ENCODE measurements at regions of chr18 and their contacts with region 1.

Region 1: DNA sequence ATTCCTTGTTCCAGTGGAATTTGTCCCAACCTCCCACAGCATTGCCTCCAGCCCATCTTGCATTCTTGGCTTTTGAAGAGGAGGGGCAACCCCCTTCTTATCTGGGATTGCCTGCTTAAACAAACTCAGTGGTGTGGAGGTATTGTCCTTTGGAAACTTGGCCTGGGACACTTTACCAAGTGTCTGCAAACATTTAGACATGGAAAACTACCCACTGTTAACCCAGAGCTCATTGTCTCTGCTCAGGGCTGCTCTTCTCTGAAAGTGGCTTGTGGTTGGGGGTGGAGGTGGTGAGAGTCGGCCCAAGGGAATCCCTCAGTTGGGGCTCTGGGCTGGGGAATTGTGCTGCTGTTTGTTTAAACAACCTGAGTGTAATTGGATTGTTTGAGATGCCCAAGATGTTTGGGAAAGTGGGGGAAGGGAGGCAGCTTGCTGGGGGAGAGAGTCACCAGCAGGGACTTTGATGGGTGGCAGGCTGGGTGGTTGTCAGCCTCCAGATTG is 178.3 kb upstream of the GATA6 start:
- DNase-seq: peak; percentile 91 to 96
- H3K4me3 ChIP-seq: no peak overlapping the region
- H3K4me3 Mint-ChIP-seq: peak overlapping the region; percentile 59
- H3K27ac Mint-ChIP-seq: peak overlapping the region; percentile 96
- H3K4me1 ChIP-seq: peaks cover 76% of the 10 kb centered on the region
- H3K4me1 Mint-ChIP-seq: peaks cover 31% of the 10 kb centered on the region
- H3K27me3 ChIP-seq: no peaks in the 10 kb centered on the region
- H3K27me3 Mint-ChIP-seq: no peaks in the 10 kb centered on the region
- CTCF ChIP-seq: no peak

Region 2: GRCh38 chr18:21955757-21956652 is 35.1 kb before region 1 on chr18:
- CTCF ChIA-PET with region 1: interaction called, 4 read pairs
- POLR2A ChIA-PET with region 1: no interaction called
- intact Hi-C with region 1: loop called (anchors 2 kb)
- DNase-seq: peak; percentile 79 to 84
- H3K4me3 ChIP-seq: no peak overlapping the region
- H3K4me3 Mint-ChIP-seq: no peak overlapping the region
- H3K27ac Mint-ChIP-seq: no peak overlapping the region
- H3K4me1 ChIP-seq: peaks cover 6% of the 10 kb centered on the region; the same call in 1 of the 2 replicates
- H3K4me1 Mint-ChIP-seq: peaks cover 14% of the 10 kb centered on the region
- H3K27me3 ChIP-seq: no peaks in the 10 kb centered on the region
- H3K27me3 Mint-ChIP-seq: no peaks in the 10 kb centered on the region
- CTCF ChIP-seq: peak; percentile 86 to 90

Region 3: DNA sequence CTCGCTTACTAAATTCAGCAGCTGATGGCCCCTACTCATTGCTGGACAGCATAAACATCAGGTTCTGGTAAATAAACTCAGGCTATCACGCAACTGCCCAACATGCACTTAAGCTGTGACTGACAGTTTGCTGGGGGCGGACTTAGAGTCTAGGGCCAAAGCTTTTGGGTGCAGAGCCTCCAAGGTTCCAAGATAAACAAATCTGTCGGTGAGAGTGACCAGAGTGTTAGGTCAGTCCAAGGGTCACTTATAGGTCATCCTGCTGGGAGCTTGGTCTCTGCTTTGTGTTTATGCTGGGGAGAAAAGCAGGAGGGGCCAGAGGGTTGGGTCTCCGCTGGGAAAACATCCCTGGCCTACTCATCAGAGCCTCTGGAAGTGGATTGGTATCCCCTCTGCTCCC is 10.4 kb before region 1 on chr18:
- CTCF ChIA-PET with region 1: interaction called, 12 read pairs
- POLR2A ChIA-PET with region 1: interaction called, 19 read pairs
- intact Hi-C with region 1: loop called (anchors 1 kb)
- DNase-seq: peak; percentile 82 to 89
- H3K4me3 ChIP-seq: no peak overlapping the region
- H3K4me3 Mint-ChIP-seq: peak overlapping the region; percentile 66
- H3K27ac Mint-ChIP-seq: peak overlapping the region; percentile 86
- H3K4me1 ChIP-seq: peaks cover 45% of the 10 kb centered on the region
- H3K4me1 Mint-ChIP-seq: peaks cover 37% of the 10 kb centered on the region
- H3K27me3 ChIP-seq: no peaks in the 10 kb centered on the region
- H3K27me3 Mint-ChIP-seq: no peaks in the 10 kb centered on the region
- CTCF ChIP-seq: no peak

Region 4: DNA sequence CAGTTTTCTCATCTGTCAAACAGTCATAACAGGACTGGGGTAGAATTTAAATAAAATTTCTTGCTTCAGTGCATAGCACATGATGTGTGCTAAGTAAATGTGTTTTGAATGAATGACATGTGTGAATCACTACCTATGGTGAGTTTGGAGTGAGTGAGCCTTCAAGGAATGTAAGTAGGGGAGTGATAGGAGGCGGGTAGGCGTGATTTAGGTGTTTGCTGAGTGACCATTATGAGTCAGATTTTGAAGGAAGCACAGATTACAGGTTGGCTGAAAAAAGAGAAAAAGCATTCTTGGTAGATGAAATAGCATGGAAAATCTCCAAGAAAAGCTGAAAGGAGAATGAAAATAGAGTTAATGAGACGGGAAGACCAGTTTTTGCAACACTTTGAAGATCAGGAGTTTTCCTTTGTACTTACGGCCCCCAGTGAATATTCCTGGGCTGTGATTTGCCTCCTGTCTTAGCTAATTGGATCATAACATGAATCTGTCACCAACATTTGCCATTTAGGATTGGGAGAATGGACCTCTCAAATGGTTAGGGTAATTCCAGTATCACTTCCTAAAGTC is 41.3 kb after region 1 on chr18:
- CTCF ChIA-PET with region 1: interaction called, 4 read pairs
- POLR2A ChIA-PET with region 1: interaction called, 5 read pairs
- intact Hi-C with region 1: loop called (anchors 1 kb)
- DNase-seq: peak; percentile 83 to 87
- H3K4me3 ChIP-seq: no peak overlapping the region
- H3K4me3 Mint-ChIP-seq: peak overlapping the region; percentile 57
- H3K27ac Mint-ChIP-seq: peak overlapping the region; percentile 95
- H3K4me1 ChIP-seq: peaks cover 44% of the 10 kb centered on the region
- H3K4me1 Mint-ChIP-seq: peaks cover 31% of the 10 kb centered on the region
- H3K27me3 ChIP-seq: no peaks in the 10 kb centered on the region; the same call in 1 of the 2 replicates
- H3K27me3 Mint-ChIP-seq: no peaks in the 10 kb centered on the region
- CTCF ChIP-seq: no peak

Region 5: DNA sequence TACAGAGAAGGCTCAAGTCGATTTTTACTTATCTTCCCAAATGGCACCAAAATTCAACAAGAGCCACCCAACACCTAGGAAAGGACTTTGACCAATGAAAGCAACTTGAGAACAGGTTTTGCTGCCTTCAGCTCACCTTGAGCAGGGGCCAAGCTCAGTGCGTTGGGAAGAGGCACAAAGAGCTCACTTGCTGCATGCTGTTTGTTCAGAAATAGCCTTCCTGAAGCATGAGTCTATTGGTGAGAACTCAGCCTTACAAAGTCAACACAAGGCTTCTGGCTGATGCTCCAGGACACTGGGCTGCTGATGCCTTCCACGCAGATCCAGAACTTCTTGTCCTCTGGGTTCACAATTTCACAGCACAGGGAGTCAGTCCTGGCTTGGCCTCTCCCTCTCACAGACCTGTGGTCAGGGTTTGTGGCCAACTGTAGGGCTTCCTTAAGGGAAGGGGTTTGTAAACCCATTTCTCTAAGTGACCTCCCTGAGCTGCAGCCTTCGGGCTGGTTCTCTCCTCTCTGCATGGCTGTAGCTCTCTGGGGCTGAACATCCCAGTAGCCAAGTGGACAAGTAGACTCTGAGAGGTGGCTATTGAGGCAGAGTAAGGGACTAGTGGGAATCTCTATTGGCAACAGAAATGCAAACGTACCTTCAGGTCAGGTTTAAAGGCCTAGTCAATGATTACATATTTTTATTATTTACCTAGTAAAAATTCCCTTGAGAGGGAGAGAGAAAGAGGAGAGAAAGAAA is 53.5 kb after region 1 on chr18:
- CTCF ChIA-PET with region 1: interaction called, 8 read pairs
- POLR2A ChIA-PET with region 1: interaction called, 18 read pairs
- intact Hi-C with region 1: loop called (anchors 1 kb)
- DNase-seq: peak; percentile 88 to 94
- H3K4me3 ChIP-seq: peak overlapping the region; percentile 22
- H3K4me3 Mint-ChIP-seq: peak overlapping the region; percentile 71
- H3K27ac Mint-ChIP-seq: peak overlapping the region; percentile 89
- H3K4me1 ChIP-seq: peaks cover 88% of the 10 kb centered on the region
- H3K4me1 Mint-ChIP-seq: peaks cover 79% of the 10 kb centered on the region
- H3K27me3 ChIP-seq: no peaks in the 10 kb centered on the region
- H3K27me3 Mint-ChIP-seq: no peaks in the 10 kb centered on the region
- CTCF ChIP-seq: no peak

Region 6: GRCh38 chr18:22084547-22084946 is 93.4 kb after region 1 on chr18:
- CTCF ChIA-PET with region 1: interaction called, 3 read pairs
- POLR2A ChIA-PET with region 1: no interaction called
- intact Hi-C with region 1: loop called (anchors 2 kb)
- DNase-seq: peak; percentile 78 to 91
- H3K4me3 ChIP-seq: peak overlapping the region; percentile 3; the same call in 1 of the 2 replicates
- H3K4me3 Mint-ChIP-seq: peak overlapping the region; percentile 69
- H3K27ac Mint-ChIP-seq: peak overlapping the region; percentile 87
- H3K4me1 ChIP-seq: peaks cover 75% of the 10 kb centered on the region
- H3K4me1 Mint-ChIP-seq: peaks cover 61% of the 10 kb centered on the region
- H3K27me3 ChIP-seq: no peaks in the 10 kb centered on the region
- H3K27me3 Mint-ChIP-seq: no peaks in the 10 kb centered on the region
- CTCF ChIP-seq: no peak